HCT116 (cell line): ENCODE measurements at regions of chr7 and their contacts with region 1.

Region 1: GRCh38 chr7:112414855-112415490 is 35.3 kb upstream of the IFRD1 start:
- DNase-seq: peak; percentile 36
- ATAC-seq: peak; percentile 93
- H3K4me3 ChIP-seq: no peak overlapping the region
- H3K27ac ChIP-seq: no peak overlapping the region
- H3K4me1 ChIP-seq: no peaks in the 10 kb centered on the region
- H3K27me3 ChIP-seq: no peaks in the 10 kb centered on the region
- CTCF ChIP-seq: peak; percentile 60 to 68 (median 65); a peak in 5 of 6 replicates
- POLR2A ChIP-seq: no peak
- RAD21 ChIP-seq: peak; percentile 69

Region 2: DNA sequence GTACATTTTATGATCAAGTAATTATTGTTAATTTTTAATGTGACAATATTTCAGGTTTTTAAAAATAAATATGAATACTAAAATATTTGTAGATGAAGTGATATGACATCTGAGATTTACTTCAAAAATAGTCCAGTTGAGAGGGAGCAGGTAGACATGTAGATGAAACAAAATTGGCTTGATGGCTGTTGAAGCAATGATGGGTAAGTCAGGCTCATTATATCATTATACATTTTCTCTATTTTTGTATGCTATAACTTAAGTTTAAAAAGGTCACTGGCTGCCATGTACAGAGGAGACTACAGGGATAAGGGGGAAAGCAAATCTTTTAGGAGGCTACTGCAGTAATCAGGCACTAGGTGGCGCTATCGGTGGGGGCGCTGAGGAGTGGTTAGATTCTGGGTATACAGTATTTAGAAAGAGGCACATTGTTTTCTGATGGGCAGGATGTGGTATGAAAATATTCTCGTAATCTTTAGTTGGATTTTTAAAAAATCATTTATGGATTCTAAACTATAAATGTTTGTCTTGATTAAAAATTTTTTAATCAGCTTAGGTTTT is 662.9 kb before region 1 on chr7:
- CTCF ChIA-PET with region 1: no interaction called
- POLR2A ChIA-PET with region 1: no interaction called
- RAD21 ChIA-PET with region 1: no interaction called
- intact Hi-C with region 1: loop called (anchors 2 kb)
- DNase-seq: peak; percentile 21
- ATAC-seq: peak; percentile 99
- H3K4me3 ChIP-seq: no peak overlapping the region
- H3K27ac ChIP-seq: no peak overlapping the region
- H3K4me1 ChIP-seq: no peaks in the 10 kb centered on the region
- H3K27me3 ChIP-seq: no peaks in the 10 kb centered on the region
- CTCF ChIP-seq: peak; percentile 67 to 95 (median 92)
- POLR2A ChIP-seq: no peak
- RAD21 ChIP-seq: peak; percentile 66

Region 3: GRCh38 chr7:111855161-111855856 is 559.7 kb before region 1 on chr7:
- CTCF ChIA-PET with region 1: no interaction called
- POLR2A ChIA-PET with region 1: no interaction called
- RAD21 ChIA-PET with region 1: no interaction called
- intact Hi-C with region 1: loop called (anchors 5 kb)
- DNase-seq: peak; percentile 38
- ATAC-seq: peak; percentile 96
- H3K4me3 ChIP-seq: no peak overlapping the region
- H3K27ac ChIP-seq: no peak overlapping the region
- H3K4me1 ChIP-seq: no peaks in the 10 kb centered on the region
- H3K27me3 ChIP-seq: no peaks in the 10 kb centered on the region
- CTCF ChIP-seq: peak; percentile 46 to 70 (median 63); a peak in 5 of 6 replicates
- POLR2A ChIP-seq: no peak
- RAD21 ChIP-seq: peak; percentile 57

Region 4: DNA sequence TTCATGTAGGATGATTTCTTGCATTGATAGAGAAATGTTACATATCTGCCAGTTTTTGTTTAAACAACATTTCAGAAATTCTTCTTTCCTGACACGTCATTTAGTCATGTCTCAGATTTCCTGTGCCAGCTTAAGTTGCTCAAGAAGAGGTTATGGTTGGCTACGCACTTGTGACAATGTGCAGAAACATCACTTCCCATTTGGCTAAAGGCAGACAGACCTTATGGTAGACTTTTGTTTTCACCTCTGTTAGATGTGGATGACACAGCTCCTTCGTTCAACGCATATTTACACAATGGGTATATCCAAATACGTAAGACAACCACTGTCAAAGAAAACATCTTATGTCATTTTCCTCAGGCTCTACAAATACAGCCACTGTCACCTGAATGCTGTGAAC is 334.5 kb before region 1 on chr7:
- CTCF ChIA-PET with region 1: no interaction called
- POLR2A ChIA-PET with region 1: no interaction called
- RAD21 ChIA-PET with region 1: no interaction called
- intact Hi-C with region 1: loop called (anchors 5 kb)
- DNase-seq: no peak
- ATAC-seq: no peak
- H3K4me3 ChIP-seq: no peak overlapping the region
- H3K27ac ChIP-seq: no peak overlapping the region
- H3K4me1 ChIP-seq: peaks cover 0 to 6% of the 10 kb centered on the region in 2 experiments; a peak in 2 of 4 replicates
- H3K27me3 ChIP-seq: no peaks in the 10 kb centered on the region
- CTCF ChIP-seq: no peak
- POLR2A ChIP-seq: no peak
- RAD21 ChIP-seq: no peak

Region 5: DNA sequence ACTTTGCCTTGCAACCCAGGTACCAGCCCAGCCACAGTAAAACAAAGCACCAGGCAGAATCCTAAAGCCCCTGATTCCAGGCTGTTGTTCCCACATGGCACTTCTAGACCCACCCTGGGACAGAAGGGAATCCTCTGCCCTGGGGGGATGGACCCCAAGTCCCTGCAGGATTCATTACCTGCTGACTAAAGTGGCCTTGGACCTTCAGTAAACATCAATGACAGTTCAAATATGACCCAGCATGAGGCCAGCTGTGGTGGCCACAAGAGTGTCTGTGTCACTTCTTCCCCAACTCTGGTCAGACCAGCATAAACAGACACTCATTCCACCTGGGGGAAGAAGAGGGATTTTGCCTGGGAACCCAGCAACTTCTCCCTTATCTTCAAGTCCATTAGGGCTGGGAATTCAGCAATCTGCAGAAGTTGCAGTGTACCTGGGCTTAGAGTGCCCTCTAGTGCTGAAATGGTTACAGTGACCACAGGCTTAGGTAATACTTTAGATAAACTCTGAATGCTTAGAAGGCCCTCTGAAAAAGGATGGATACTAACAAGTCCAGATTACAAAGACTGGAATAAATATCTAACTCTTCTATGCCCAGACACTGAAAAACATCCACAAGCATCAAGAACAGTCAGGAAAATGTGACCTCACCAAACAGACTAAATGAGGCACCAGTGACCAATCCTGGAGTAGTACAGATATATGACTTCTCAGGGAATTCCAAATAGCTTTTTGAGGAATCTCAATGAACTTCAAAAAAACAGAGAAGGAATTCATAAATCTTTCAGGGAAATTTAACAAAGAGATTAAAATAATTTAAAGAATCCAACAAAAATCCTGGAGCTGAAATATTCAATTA is 483.7 kb after region 1 on chr7:
- CTCF ChIA-PET with region 1: no interaction called
- POLR2A ChIA-PET with region 1: no interaction called
- RAD21 ChIA-PET with region 1: no interaction called
- intact Hi-C with region 1: loop called (anchors 10 kb)
- DNase-seq: peak; percentile 51
- ATAC-seq: peak; percentile 95
- H3K4me3 ChIP-seq: no peak overlapping the region
- H3K27ac ChIP-seq: no peak overlapping the region
- H3K4me1 ChIP-seq: no peaks in the 10 kb centered on the region
- H3K27me3 ChIP-seq: no peaks in the 10 kb centered on the region
- CTCF ChIP-seq: peak; percentile 62 to 89 (median 81); a peak in 5 of 6 replicates
- POLR2A ChIP-seq: no peak
- RAD21 ChIP-seq: peak; percentile 86